AG04450 (cell line): ENCODE measurements at regions of chr18 and their contacts with region 1.

Region 1: GRCh38 chr18:11995445-11996189 is 14.3 kb downstream of the IMPA2 start:
- DNase-seq: peak; percentile 48
- H3K4me3 ChIP-seq: no peak overlapping the region
- H3K27ac ChIP-seq: no peak overlapping the region
- H3K27me3 ChIP-seq: no peaks in the 10 kb centered on the region
- CTCF ChIP-seq: peak; percentile 75

Region 2: DNA sequence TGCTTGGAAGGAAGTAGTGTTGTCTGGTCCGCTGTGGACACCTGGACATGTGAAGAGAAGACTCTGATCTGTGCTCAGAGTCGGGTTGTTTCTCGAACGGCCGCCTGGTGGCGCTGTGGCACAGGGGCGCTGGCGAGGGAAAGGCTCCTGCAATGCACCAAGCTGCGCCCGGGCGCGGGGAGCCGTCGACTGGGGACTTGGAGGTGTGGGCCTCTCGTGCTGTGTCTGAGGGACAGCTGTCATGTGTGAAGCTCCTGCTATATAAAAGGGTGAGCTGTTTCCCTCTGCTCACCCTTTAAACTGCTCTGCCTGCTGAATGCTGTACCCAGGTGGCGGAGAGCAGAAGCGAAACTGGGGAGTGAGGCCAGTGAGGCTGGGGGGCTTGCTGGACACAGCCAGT is 262.6 kb before region 1 on chr18:
- CTCF ChIA-PET with region 1: interaction called, 68 read pairs
- POLR2A ChIA-PET with region 1: no interaction called
- DNase-seq: peak; percentile 15
- H3K4me3 ChIP-seq: peak overlapping the region; percentile 43
- H3K27ac ChIP-seq: no peak overlapping the region
- H3K27me3 ChIP-seq: peaks cover 19% of the 10 kb centered on the region
- CTCF ChIP-seq: peak; percentile 90

Region 3: GRCh38 chr18:11947214-11948191 is 48.1 kb before region 1 on chr18:
- CTCF ChIA-PET with region 1: interaction called, 342 read pairs
- POLR2A ChIA-PET with region 1: interaction called, 7 read pairs
- DNase-seq: peak; percentile 87
- H3K4me3 ChIP-seq: peak overlapping the region; percentile 37
- H3K27ac ChIP-seq: peak overlapping the region; percentile 89
- H3K27me3 ChIP-seq: no peaks in the 10 kb centered on the region
- CTCF ChIP-seq: no peak

Region 4: DNA sequence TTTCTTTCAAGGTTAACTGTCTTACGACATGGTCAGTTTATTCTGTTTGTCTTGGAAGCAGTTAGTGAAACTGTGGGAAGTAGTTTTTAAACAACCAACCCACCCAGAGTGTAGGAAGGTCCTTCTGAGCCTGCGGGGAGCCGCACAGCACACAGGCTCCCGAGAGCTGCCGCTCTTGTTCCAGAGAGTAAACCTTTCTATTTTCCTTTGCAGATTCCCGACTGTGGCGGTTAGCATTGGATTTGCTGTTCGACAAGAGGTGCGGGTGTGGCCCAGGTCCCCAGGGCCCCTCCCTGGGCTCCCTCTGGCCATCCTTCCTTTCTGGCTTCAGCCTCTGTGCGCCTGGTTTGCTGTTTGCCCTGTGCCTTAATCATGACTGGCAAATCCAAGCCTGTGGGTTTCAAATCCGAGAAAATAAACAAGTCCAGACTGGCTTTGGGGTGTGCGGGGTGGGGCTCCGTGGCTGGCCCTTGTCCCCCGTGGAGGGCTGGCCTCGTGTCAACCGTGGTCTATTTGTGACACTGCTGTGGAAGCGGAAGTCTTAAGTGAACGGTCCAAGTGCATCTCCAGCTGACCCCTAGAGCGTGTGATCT is 16.4 kb after region 1 on chr18:
- CTCF ChIA-PET with region 1: interaction called, 12 read pairs
- POLR2A ChIA-PET with region 1: interaction called, 6 read pairs
- DNase-seq: no peak
- H3K4me3 ChIP-seq: no peak overlapping the region
- H3K27ac ChIP-seq: no peak overlapping the region
- H3K27me3 ChIP-seq: no peaks in the 10 kb centered on the region
- CTCF ChIP-seq: no peak